Caco-2 (cell line): ENCODE measurements at regions of chr11 and their contacts with region 1.

Region 1: DNA sequence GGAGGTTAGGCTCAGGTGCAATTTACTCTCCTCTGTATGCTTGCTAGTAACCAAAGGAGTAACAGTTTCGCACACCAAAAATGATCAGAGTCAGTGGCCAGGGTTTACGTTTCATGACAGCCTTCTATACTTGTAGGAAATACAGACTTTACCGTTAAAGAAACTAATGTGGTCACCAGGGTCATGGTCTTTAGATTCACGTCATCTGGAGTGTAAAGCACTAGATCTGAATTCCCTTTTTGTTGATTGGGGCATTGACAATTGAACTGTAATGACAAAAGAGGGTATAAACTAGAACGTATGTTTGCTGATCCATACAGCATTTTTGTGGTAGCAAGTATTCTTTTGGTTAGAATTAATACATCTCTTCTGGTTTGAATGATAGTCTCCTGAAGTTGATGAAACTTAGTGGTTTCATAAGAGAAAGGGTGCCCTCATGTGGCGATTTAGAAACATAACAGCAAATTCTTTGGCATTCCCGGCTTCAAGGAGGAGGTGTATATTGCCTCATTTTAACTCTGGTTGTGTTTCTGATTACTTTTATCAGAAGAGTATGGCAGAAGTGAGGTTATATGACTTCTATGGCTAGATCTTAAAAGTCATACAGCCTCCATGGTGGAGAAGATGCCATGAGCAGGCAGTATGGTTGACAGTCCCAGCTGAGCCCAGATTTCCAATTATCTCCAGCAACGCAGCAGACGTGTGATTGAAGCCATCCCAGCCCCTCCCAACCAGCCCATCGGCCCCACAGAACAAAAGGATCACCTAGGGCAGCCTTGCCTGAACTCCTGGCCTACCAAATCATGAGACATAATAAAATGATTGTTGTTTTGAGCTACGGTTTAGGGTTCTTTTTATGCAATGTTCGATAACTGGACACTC is 35.1 kb downstream of the MMP7 start:
- DNase-seq: peak; percentile 57 to 81
- H3K4me3 ChIP-seq: no peak overlapping the region
- H3K4me3 Mint-ChIP-seq: peak overlapping the region; percentile 34
- H3K27ac Mint-ChIP-seq: peak overlapping the region; percentile 72
- H3K4me1 ChIP-seq: peaks cover 33% of the 10 kb centered on the region
- H3K4me1 Mint-ChIP-seq: peaks cover 25% of the 10 kb centered on the region
- H3K27me3 ChIP-seq: no peaks in the 10 kb centered on the region
- H3K27me3 Mint-ChIP-seq: no peaks in the 10 kb centered on the region
- CTCF ChIP-seq: peak; percentile 82 to 93

Region 2: DNA sequence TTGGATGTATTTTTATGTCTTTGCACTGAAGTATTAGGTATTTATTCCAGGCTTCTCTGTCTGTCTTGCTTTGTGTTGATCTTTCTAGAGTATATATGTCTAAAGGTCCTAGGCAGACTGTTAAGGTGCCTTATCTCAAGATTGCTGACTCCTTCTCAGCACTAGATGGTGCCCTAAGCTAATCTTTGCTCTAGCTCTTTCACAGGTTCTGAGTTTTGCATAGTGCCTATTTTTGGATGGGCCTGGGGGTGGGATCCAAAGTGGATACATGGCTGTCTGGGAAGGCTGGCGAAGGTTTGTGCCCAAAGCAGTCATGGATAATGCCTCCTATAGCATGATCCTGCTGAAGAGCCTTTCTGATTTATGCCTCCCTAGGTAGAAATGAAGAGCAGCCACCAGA is 1066.5 kb before region 1 on chr11:
- CTCF ChIA-PET with region 1: no interaction called
- POLR2A ChIA-PET with region 1: no interaction called
- intact Hi-C with region 1: loop called (anchors 5 kb)
- DNase-seq: peak in 1 of 2 experiments; percentile 65
- H3K4me3 ChIP-seq: no peak overlapping the region
- H3K4me3 Mint-ChIP-seq: peak overlapping the region; percentile 10
- H3K27ac Mint-ChIP-seq: no peak overlapping the region
- H3K4me1 ChIP-seq: peaks cover 22% of the 10 kb centered on the region
- H3K4me1 Mint-ChIP-seq: peaks cover 23% of the 10 kb centered on the region
- H3K27me3 ChIP-seq: no peaks in the 10 kb centered on the region
- H3K27me3 Mint-ChIP-seq: no peaks in the 10 kb centered on the region
- CTCF ChIP-seq: peak; percentile 74 to 79

Region 3: GRCh38 chr11:102225689-102226568 is 269.5 kb before region 1 on chr11:
- CTCF ChIA-PET with region 1: no interaction called
- POLR2A ChIA-PET with region 1: no interaction called
- intact Hi-C with region 1: no loop called
- DNase-seq: no peak
- H3K4me3 ChIP-seq: no peak overlapping the region
- H3K4me3 Mint-ChIP-seq: no peak overlapping the region
- H3K27ac Mint-ChIP-seq: peak overlapping the region; percentile 55
- H3K4me1 ChIP-seq: peaks cover 58% of the 10 kb centered on the region
- H3K4me1 Mint-ChIP-seq: peaks cover 54% of the 10 kb centered on the region
- H3K27me3 ChIP-seq: no peaks in the 10 kb centered on the region
- H3K27me3 Mint-ChIP-seq: no peaks in the 10 kb centered on the region
- CTCF ChIP-seq: no peak

Region 4: GRCh38 chr11:102287964-102288724 is 207.3 kb before region 1 on chr11:
- CTCF ChIA-PET with region 1: no interaction called
- POLR2A ChIA-PET with region 1: no interaction called
- intact Hi-C with region 1: loop called (anchors 1 kb)
- DNase-seq: peak; percentile 66 to 78
- H3K4me3 ChIP-seq: no peak overlapping the region
- H3K4me3 Mint-ChIP-seq: peak overlapping the region; percentile 1
- H3K27ac Mint-ChIP-seq: no peak overlapping the region
- H3K4me1 ChIP-seq: peaks cover 12% of the 10 kb centered on the region
- H3K4me1 Mint-ChIP-seq: peaks cover 7% of the 10 kb centered on the region
- H3K27me3 ChIP-seq: no peaks in the 10 kb centered on the region
- H3K27me3 Mint-ChIP-seq: no peaks in the 10 kb centered on the region
- CTCF ChIP-seq: peak; percentile 84

Region 5: DNA sequence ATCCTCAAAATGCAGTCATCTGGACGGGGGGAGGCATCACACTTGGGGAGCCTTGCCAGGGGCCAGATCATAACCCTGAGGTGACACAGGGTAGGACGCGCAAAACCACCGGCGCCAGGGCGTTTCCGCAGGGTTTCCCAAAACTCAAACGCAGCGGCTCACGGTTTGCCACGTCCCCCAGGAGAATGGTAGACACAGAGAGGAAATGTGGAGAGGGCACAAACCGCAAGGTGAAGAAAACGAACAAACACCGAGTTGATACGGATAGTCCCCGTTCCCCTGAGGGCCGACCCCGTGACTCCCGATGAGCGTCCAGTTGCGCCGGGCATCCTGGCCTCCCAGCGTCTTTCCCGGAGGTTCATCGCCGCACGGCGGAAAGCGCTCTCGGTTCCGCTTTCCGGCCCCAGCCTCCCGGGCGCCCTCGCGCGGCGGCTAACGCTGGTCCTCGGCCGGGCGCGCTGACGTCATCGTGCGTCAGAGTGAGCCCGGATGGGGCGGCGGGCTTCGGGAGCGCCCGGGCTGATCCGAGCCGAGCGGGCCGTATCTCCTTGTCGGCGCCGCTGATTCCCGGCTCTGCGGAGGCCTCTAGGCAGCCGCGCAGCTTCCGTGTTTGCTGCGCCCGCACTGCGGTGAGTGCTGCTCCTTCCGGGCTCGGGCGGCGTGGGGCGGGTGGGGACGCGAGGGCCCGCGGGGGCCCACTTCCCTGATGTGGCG is 148.5 kb before region 1 on chr11 and contains the start of gene BIRC2:
- CTCF ChIA-PET with region 1: interaction called, 8 read pairs
- POLR2A ChIA-PET with region 1: interaction called, 3 read pairs
- intact Hi-C with region 1: loop called (anchors 1 kb)
- DNase-seq: peak; percentile 96 to 100
- H3K4me3 ChIP-seq: peak within 1 kb of the TSS; percentile 52
- H3K4me3 Mint-ChIP-seq: peak within 1 kb of the TSS; percentile 93
- H3K27ac Mint-ChIP-seq: peak within 1 kb of the TSS; percentile 68
- H3K4me1 ChIP-seq: peaks cover 17% of the 10 kb centered on the region
- H3K4me1 Mint-ChIP-seq: peaks cover 8% of the 10 kb centered on the region
- H3K27me3 ChIP-seq: no peaks in the 10 kb centered on the region
- H3K27me3 Mint-ChIP-seq: no peaks in the 10 kb centered on the region
- CTCF ChIP-seq: peak; percentile 71 to 97
- total RNA-seq, gene BIRC2: 52.7 and 53.5 TPM in 2 replicates

Region 6: GRCh38 chr11:102390667-102391465 is 104.5 kb before region 1 on chr11:
- CTCF ChIA-PET with region 1: interaction called, 30 read pairs
- POLR2A ChIA-PET with region 1: no interaction called
- intact Hi-C with region 1: loop called (anchors 1 kb)
- DNase-seq: peak; percentile 89
- H3K4me3 ChIP-seq: no peak overlapping the region
- H3K4me3 Mint-ChIP-seq: no peak overlapping the region
- H3K27ac Mint-ChIP-seq: peak overlapping the region; percentile 3
- H3K4me1 ChIP-seq: peaks cover 16% of the 10 kb centered on the region
- H3K4me1 Mint-ChIP-seq: peaks cover 21% of the 10 kb centered on the region
- H3K27me3 ChIP-seq: no peaks in the 10 kb centered on the region
- H3K27me3 Mint-ChIP-seq: no peaks in the 10 kb centered on the region
- CTCF ChIP-seq: peak; percentile 97 to 98

Region 7: GRCh38 chr11:102451681-102452460 is 43.5 kb before region 1 on chr11:
- CTCF ChIA-PET with region 1: no interaction called
- POLR2A ChIA-PET with region 1: no interaction called
- intact Hi-C with region 1: loop called (anchors 1 kb)
- DNase-seq: peak; percentile 81 to 87
- H3K4me3 ChIP-seq: peak overlapping the region; percentile 90
- H3K4me3 Mint-ChIP-seq: peak overlapping the region; percentile 99
- H3K27ac Mint-ChIP-seq: peak overlapping the region; percentile 98
- H3K4me1 ChIP-seq: peaks cover 55% of the 10 kb centered on the region
- H3K4me1 Mint-ChIP-seq: peaks cover 52% of the 10 kb centered on the region
- H3K27me3 ChIP-seq: no peaks in the 10 kb centered on the region
- H3K27me3 Mint-ChIP-seq: no peaks in the 10 kb centered on the region
- CTCF ChIP-seq: peak; percentile 24 to 51

Region 8: DNA sequence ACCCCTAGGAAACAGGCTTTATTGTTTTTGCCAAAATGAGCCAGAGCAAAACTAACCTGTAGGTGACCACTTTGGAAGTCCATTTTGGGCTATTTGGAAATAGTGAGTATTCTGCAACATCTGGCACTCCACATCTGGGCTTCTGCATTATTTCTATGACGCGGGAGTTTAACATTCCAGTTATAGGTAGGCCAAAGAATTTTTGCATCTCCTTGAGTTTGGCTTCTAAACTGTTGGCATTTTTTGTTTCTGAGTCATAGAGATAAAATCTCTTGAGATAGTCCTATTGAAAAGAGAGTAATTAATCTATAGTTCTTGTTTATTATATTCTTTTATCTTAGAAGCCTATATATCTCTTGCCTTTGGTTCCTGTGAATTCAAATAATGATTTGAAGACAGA is 32.3 kb after region 1 on chr11:
- CTCF ChIA-PET with region 1: no interaction called
- POLR2A ChIA-PET with region 1: no interaction called
- intact Hi-C with region 1: no loop called
- DNase-seq: no peak
- H3K4me3 ChIP-seq: no peak overlapping the region
- H3K4me3 Mint-ChIP-seq: no peak overlapping the region
- H3K27ac Mint-ChIP-seq: no peak overlapping the region
- H3K4me1 ChIP-seq: peaks cover 14% of the 10 kb centered on the region
- H3K4me1 Mint-ChIP-seq: peaks cover 17% of the 10 kb centered on the region
- H3K27me3 ChIP-seq: no peaks in the 10 kb centered on the region
- H3K27me3 Mint-ChIP-seq: no peaks in the 10 kb centered on the region
- CTCF ChIP-seq: no peak